PC-9 (cell line): ENCODE measurements at regions of chr1 and their contacts with region 1.

Region 1: GRCh38 chr1:230588323-230588746 is 53.9 kb upstream of the COG2 start:
- DNase-seq: no peak
- H3K4me3 ChIP-seq: no peak overlapping the region
- H3K27ac ChIP-seq: no peak overlapping the region
- H3K4me1 ChIP-seq: no peaks in the 10 kb centered on the region
- H3K27me3 ChIP-seq: peaks cover 78% of the 10 kb centered on the region
- CTCF ChIP-seq: no peak

Region 2: GRCh38 chr1:230575886-230576500 is 12.3 kb before region 1 on chr1:
- CTCF ChIA-PET with region 1: no interaction called
- POLR2A ChIA-PET with region 1: interaction called, 14 read pairs
- intact Hi-C with region 1: no loop called
- DNase-seq: no peak
- H3K4me3 ChIP-seq: no peak overlapping the region
- H3K27ac ChIP-seq: no peak overlapping the region
- H3K4me1 ChIP-seq: 0 out of 2 replicates have a peak, but pooled peaks cover 6% of the 10 kb centered on the region
- H3K27me3 ChIP-seq: peaks cover 31% of the 10 kb centered on the region
- CTCF ChIP-seq: no peak